ENCODE measurements at regions of chr20 and their contacts with region 1.

Region 1: DNA sequence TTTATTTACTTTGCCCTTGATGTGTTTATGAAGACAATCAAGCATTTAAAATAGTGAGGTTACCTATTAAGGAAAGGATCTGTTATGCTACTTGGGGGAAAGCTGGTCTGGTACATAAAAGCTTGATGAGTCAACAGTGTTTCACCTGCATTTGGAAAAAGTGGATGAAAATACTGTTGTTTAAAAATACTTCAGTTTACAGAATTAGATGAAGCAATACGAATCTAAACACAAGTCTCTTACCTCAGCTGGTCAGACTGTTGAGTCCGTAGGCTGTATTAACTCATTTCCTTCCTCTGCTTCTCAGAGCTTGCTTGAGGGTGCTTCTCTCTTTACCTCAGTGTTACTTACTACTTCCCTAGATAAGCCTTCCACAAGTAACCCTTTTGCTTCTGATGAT is 36.1 kb downstream of the NKX2-4 start:
- DNase-seq: no peak
- ATAC-seq: no peak
- H3K4me3 ChIP-seq: no peak overlapping the region
- H3K27ac ChIP-seq: no peak overlapping the region
- H3K4me1 ChIP-seq: no peaks in the 10 kb centered on the region
- H3K27me3 ChIP-seq: no peaks in the 10 kb centered on the region
- CTCF ChIP-seq: no peak

Region 2: GRCh38 chr20:21323640-21324039 is 37.6 kb before region 1 on chr20:
- intact Hi-C with region 1: loop called in 1 of 2 experiments (anchors 5 kb)
- DNase-seq: no peak
- ATAC-seq: peak; percentile 79 to 91 (median 86)
- H3K4me3 ChIP-seq: no peak overlapping the region
- H3K27ac ChIP-seq: no peak overlapping the region
- H3K4me1 ChIP-seq: peaks cover 45% of the 10 kb centered on the region
- H3K27me3 ChIP-seq: no peaks in the 10 kb centered on the region
- CTCF ChIP-seq: no peak

Region 3: GRCh38 chr20:21411725-21412124 is 50.5 kb after region 1 on chr20:
- intact Hi-C with region 1: loop called in 1 of 2 experiments (anchors 1 kb)
- DNase-seq: no peak
- ATAC-seq: no peak
- H3K4me3 ChIP-seq: no peak overlapping the region
- H3K27ac ChIP-seq: no peak overlapping the region
- H3K4me1 ChIP-seq: no peaks in the 10 kb centered on the region
- H3K27me3 ChIP-seq: peaks cover 0 to 23% (median 0%) of the 10 kb centered on the region in 3 donors
- CTCF ChIP-seq: no peak